Activated naive CD4-positive, alpha-beta T cell treated with anti-CD3 and anti-CD28 coated beads for 36 hours (primary cell): ENCODE measurements at regions of chr19 and their contacts with region 1.

Region 1: GRCh38 chr19:10403137-10404021 is at the start of gene CDC37:
- DNase-seq: peak; percentile 98
- H3K4me3 Mint-ChIP-seq: peak within 1 kb of the TSS; percentile 91
- H3K27ac Mint-ChIP-seq: peak within 1 kb of the TSS; percentile 77
- H3K4me1 Mint-ChIP-seq: peaks cover 65% of the 10 kb centered on the region
- H3K27me3 Mint-ChIP-seq: no peaks in the 10 kb centered on the region
- total RNA-seq, gene CDC37: 158 to 164 TPM

Region 2: GRCh38 chr19:10388957-10389356 is 14.4 kb before region 1 on chr19:
- CTCF ChIA-PET with region 1: interaction called, 30 read pairs
- intact Hi-C with region 1: no loop called
- DNase-seq: peak; percentile 91
- H3K4me3 Mint-ChIP-seq: no peak overlapping the region
- H3K27ac Mint-ChIP-seq: no peak overlapping the region
- H3K4me1 Mint-ChIP-seq: no peaks in the 10 kb centered on the region
- H3K27me3 Mint-ChIP-seq: no peaks in the 10 kb centered on the region

Region 3: DNA sequence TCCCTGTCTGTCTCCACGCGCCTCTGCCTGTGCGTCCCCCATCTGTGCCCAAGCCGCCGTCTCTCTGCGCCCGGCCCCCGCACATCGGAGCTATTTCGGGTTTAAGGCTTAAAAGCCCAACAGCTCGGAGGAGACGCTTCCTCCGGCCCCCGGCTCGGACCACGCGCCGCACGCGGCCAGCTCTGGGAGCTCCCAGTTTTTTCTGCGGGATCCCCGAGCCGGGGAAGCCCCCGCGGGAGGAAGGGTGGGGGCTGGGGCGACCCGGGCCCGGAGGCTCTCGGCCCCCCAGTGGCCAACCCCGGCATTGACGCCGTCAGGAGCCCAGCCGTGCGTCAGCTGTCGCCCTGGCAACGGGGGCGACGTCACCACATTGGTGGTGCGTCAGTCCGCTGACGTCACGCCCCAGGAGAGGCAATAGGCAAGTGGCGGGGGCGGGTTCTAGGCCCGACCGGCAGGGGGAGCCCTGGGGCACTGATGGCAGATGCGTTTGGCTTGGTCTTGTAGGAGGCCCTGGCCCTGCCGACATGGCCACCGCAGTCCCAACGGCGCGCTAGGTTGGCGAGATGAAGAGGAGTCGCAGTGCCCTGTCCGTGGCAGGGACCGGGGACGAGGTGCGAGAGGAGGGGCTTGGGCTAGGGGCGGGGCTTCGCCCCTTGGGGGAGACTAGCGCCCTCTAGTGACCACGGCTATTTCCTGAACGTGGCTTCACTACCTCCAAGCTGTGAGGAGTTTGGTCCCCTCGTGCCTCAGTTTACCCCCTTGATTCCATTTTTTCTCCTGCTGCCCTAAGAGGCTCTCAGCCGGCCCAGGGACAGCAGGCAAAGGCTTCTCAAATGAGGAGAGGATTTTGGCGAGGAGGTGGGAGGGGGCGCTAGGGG is 13.2 kb after region 1 on chr19:
- CTCF ChIA-PET with region 1: interaction called, 142 read pairs
- intact Hi-C with region 1: loop called (anchors 1 kb)
- DNase-seq: peak; percentile 94
- H3K4me3 Mint-ChIP-seq: peak overlapping the region; percentile 75
- H3K27ac Mint-ChIP-seq: peak overlapping the region; percentile 82
- H3K4me1 Mint-ChIP-seq: peaks cover 53% of the 10 kb centered on the region
- H3K27me3 Mint-ChIP-seq: peaks cover 40% of the 10 kb centered on the region

Region 4: DNA sequence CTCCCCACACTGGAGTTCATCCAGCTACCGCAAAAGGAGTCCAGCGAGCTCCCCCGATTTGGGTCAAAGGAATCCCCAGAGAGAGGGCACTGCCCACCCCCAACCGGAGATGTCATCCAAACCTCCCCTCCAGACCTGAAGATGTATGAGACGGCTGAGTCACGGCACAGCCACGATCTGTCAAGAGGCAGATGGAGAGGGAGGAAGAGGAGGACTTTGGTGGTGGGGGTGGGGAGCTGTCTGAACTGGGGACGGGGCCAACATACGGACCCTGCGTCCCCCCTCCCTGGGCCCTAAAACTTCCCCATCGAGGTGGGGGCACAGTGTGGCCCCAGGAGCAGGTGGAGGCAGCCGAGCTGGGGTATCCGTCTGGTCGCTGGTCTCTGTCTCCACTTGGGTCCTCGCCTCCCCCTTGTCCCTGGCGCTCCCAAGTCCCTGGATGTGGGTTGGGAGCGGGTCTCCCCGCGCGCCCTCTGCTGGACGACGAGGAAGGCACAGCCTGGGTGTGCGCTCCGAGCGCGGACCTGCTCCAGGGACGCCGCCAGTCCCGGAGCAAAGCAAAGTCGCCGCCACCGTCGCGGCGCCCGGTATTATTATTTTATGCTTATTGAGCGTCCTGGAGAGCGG is 20.7 kb after region 1 on chr19:
- CTCF ChIA-PET with region 1: interaction called, 142 read pairs
- intact Hi-C with region 1: loop called (anchors 2 kb)
- DNase-seq: peak; percentile 81
- H3K4me3 Mint-ChIP-seq: peak overlapping the region; percentile 67
- H3K27ac Mint-ChIP-seq: peak overlapping the region; percentile 91
- H3K4me1 Mint-ChIP-seq: peaks cover 70% of the 10 kb centered on the region
- H3K27me3 Mint-ChIP-seq: peaks cover 63% of the 10 kb centered on the region

Region 5: GRCh38 chr19:10431943-10432735 is 28.8 kb after region 1 on chr19:
- CTCF ChIA-PET with region 1: interaction called, 64 read pairs
- intact Hi-C with region 1: loop called (anchors 1 kb)
- DNase-seq: peak; percentile 68
- H3K4me3 Mint-ChIP-seq: peak overlapping the region; percentile 72
- H3K27ac Mint-ChIP-seq: no peak overlapping the region
- H3K4me1 Mint-ChIP-seq: peaks cover 38% of the 10 kb centered on the region
- H3K27me3 Mint-ChIP-seq: peaks cover 42% of the 10 kb centered on the region

Region 6: DNA sequence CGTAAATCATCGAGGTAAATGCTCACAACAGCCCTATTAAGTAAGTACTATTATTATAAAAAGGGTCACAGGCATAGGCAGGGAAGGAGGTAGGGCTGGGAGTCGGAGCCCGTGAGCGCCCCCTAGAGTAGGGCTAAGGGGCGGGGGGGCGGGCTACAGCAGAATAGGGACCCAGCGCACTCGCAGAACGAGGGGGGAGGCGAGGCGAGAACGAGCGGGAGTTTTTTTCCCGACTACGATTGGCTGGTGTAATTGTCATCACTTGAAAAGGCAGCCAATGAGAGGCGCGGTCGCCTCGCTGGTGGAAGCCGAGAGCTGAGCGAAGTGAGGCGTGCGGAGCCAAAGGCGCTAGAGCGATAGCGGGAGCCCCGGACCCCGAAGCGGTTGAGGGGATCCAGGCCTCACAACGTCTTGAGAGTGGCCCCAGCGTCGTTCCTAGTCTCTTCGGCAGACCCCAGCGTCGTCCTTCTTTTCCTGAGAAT is 75.6 kb after region 1 on chr19:
- CTCF ChIA-PET with region 1: interaction called, 7 read pairs
- intact Hi-C with region 1: loop called (anchors 2 kb)
- DNase-seq: peak; percentile 94
- H3K4me3 Mint-ChIP-seq: peak overlapping the region; percentile 45
- H3K27ac Mint-ChIP-seq: no peak overlapping the region
- H3K4me1 Mint-ChIP-seq: peaks cover 16% of the 10 kb centered on the region
- H3K27me3 Mint-ChIP-seq: no peaks in the 10 kb centered on the region